GM23248 (cell line): ENCODE measurements at regions of chr3 and their contacts with region 1.

Region 1: GRCh38 chr3:153595186-153595815 is 433.3 kb downstream of the RAP2B start:
- DNase-seq: peak; percentile 66
- H3K4me3 ChIP-seq: no peak overlapping the region
- H3K27ac ChIP-seq: no peak overlapping the region
- H3K4me1 ChIP-seq: peaks cover 12% of the 10 kb centered on the region
- H3K27me3 ChIP-seq: no peaks in the 10 kb centered on the region

Region 2: GRCh38 chr3:153043729-153044328 is 551.5 kb before region 1 on chr3:
- in situ Hi-C with region 1: loop called (anchors 10 kb)
- DNase-seq: peak; percentile 81
- H3K4me3 ChIP-seq: peak overlapping the region; percentile 70
- H3K27ac ChIP-seq: peak overlapping the region; percentile 76
- H3K4me1 ChIP-seq: peaks cover 24% of the 10 kb centered on the region
- H3K27me3 ChIP-seq: no peaks in the 10 kb centered on the region